Endothelial cell of umbilical vein (primary cell): ENCODE measurements at regions of chr22 and their contacts with region 1.

Region 1: GRCh38 chr22:38927033-38927781 is 30.2 kb upstream of the APOBEC3A start:
- DNase-seq: peak; percentile 63
- H3K4me3 ChIP-seq: no peak overlapping the region
- H3K27ac ChIP-seq: no peak overlapping the region
- H3K4me1 ChIP-seq: peaks cover 18% of the 10 kb centered on the region
- H3K27me3 ChIP-seq: peaks cover 0 to 2% of the 10 kb centered on the region in 2 experiments
- CTCF ChIP-seq: peak; percentile 64 to 90
- POLR2A ChIP-seq: no peak

Region 2: GRCh38 chr22:38819387-38819940 is 107.7 kb before region 1 on chr22:
- CTCF ChIA-PET with region 1: no interaction called
- POLR2A ChIA-PET with region 1: no interaction called
- dilution Hi-C with region 1: no loop called
- intact Hi-C with region 1: no loop called
- DNase-seq: no peak
- H3K4me3 ChIP-seq: no peak overlapping the region
- H3K27ac ChIP-seq: no peak overlapping the region
- H3K4me1 ChIP-seq: no peaks in the 10 kb centered on the region
- H3K27me3 ChIP-seq: peaks cover 1 to 2% of the 10 kb centered on the region in 2 experiments
- CTCF ChIP-seq: no peak
- POLR2A ChIP-seq: no peak

Region 3: DNA sequence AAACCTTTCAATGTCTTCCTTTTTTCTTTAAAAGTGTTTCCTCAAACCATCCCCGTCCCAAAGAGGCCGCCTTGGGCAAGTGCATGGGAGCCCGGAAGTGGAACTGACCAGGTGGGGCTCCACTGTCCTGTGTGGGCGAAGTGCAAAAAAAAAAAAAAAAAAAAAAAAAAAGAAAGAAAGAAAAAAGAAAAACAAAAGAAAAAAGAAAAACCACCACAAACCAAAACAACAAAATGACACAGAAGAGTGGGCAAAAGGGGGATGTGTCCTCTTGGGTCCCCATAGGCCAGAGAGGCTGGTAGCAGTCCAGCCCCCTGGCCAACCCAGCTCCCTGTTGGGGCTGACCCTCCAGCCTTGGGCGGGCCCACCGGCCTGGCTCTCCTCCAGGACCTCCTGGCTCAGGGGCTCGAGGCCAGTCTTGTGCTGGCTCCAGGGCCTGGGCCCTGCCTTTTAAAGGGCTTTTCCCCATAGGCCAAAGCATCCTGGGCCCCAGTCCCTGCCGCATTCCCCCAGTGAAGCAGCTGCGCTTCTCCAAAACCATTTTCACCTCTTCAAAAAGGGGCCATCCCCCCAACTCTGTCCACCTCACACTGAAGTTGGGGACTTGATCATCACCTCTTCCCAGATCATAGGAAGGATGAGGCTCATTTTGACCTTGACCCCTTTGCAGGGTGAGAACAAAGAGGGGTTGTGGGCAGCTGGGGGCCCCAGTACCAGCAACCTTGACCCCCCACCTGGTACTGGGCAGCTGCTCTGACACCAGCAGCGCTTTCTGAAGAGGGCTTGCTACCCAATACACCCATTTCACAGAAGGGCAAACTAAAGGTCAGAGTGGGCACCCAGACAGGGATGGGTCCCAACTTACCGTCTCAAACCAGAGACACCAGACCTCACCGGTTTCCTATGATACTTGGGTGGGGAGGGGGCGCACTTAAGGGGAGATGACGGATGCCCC is 64.6 kb before region 1 on chr22:
- CTCF ChIA-PET with region 1: no interaction called
- POLR2A ChIA-PET with region 1: interaction called, 16 read pairs
- dilution Hi-C with region 1: no loop called
- intact Hi-C with region 1: no loop called
- DNase-seq: no peak
- H3K4me3 ChIP-seq: no peak overlapping the region
- H3K27ac ChIP-seq: no peak overlapping the region
- H3K4me1 ChIP-seq: peaks cover 18% of the 10 kb centered on the region
- H3K27me3 ChIP-seq: no peaks in the 10 kb centered on the region
- CTCF ChIP-seq: no peak
- POLR2A ChIP-seq: no peak

Region 4: GRCh38 chr22:38941488-38941987 is 14.3 kb after region 1 on chr22:
- CTCF ChIA-PET with region 1: interaction called, 15 read pairs
- POLR2A ChIA-PET with region 1: no interaction called
- dilution Hi-C with region 1: no loop called
- intact Hi-C with region 1: no loop called
- DNase-seq: no peak
- H3K4me3 ChIP-seq: no peak overlapping the region
- H3K27ac ChIP-seq: no peak overlapping the region
- H3K4me1 ChIP-seq: no peaks in the 10 kb centered on the region
- H3K27me3 ChIP-seq: peaks cover 2 to 6% of the 10 kb centered on the region in 2 experiments
- CTCF ChIP-seq: no peak
- POLR2A ChIP-seq: no peak

Region 5: GRCh38 chr22:38973289-38974169 is 46.3 kb after region 1 on chr22:
- CTCF ChIA-PET with region 1: interaction called, 10 read pairs
- POLR2A ChIA-PET with region 1: no interaction called
- dilution Hi-C with region 1: no loop called
- intact Hi-C with region 1: no loop called
- DNase-seq: peak; percentile 46
- H3K4me3 ChIP-seq: no peak overlapping the region
- H3K27ac ChIP-seq: no peak overlapping the region
- H3K4me1 ChIP-seq: no peaks in the 10 kb centered on the region
- H3K27me3 ChIP-seq: no peaks in the 10 kb centered on the region
- CTCF ChIP-seq: peak; percentile 74 to 83
- POLR2A ChIP-seq: no peak

Region 6: GRCh38 chr22:38981992-38982927 is 55.1 kb after region 1 on chr22 and contains the start of gene APOBEC3B:
- CTCF ChIA-PET with region 1: no interaction called
- POLR2A ChIA-PET with region 1: interaction called, 5 read pairs
- dilution Hi-C with region 1: no loop called
- intact Hi-C with region 1: loop called (anchors 10 kb)
- DNase-seq: peak; percentile 79
- H3K4me3 ChIP-seq: peak within 1 kb of the TSS; percentile 3 to 40 (median 28)
- H3K27ac ChIP-seq: no peak within 1 kb of the TSS
- H3K4me1 ChIP-seq: peaks cover 2% of the 10 kb centered on the region
- H3K27me3 ChIP-seq: no peaks in the 10 kb centered on the region
- CTCF ChIP-seq: no peak
- POLR2A ChIP-seq: no peak
- total RNA-seq, gene APOBEC3B: 10.3 and 13.6 TPM in 2 replicates

Region 7: GRCh38 chr22:39003165-39003638 is 76.0 kb after region 1 on chr22:
- CTCF ChIA-PET with region 1: interaction called, 13 read pairs
- POLR2A ChIA-PET with region 1: no interaction called
- dilution Hi-C with region 1: no loop called
- intact Hi-C with region 1: no loop called
- DNase-seq: peak; percentile 83
- H3K4me3 ChIP-seq: no peak overlapping the region
- H3K27ac ChIP-seq: no peak overlapping the region
- H3K4me1 ChIP-seq: no peaks in the 10 kb centered on the region
- H3K27me3 ChIP-seq: no peaks in the 10 kb centered on the region
- CTCF ChIP-seq: peak; percentile 67 to 72
- POLR2A ChIP-seq: no peak